ENCODE measurements at regions of chr21 and their contacts with region 1.

Region 1: GRCh38 chr21:41361786-41362604 is at the start of gene MX2:
- DNase-seq: peak; percentile 35
- H3K4me3 ChIP-seq: peak within 1 kb of the TSS; percentile 58
- H3K27ac ChIP-seq: peak within 1 kb of the TSS; percentile 29
- H3K4me1 ChIP-seq: peaks cover 28% of the 10 kb centered on the region
- CTCF ChIP-seq: no peak
- total RNA-seq, gene MX2: 7.3 and 10.4 TPM in 2 replicates

Region 2: GRCh38 chr21:41196636-41197389 is 165.2 kb before region 1 on chr21:
- CTCF ChIA-PET with region 1: no interaction called
- POLR2A ChIA-PET with region 1: no interaction called
- intact Hi-C with region 1: no loop called
- DNase-seq: no peak
- H3K4me3 ChIP-seq: no peak overlapping the region
- H3K27ac ChIP-seq: no peak overlapping the region
- H3K4me1 ChIP-seq: no peaks in the 10 kb centered on the region
- CTCF ChIP-seq: no peak

Region 3: GRCh38 chr21:41283211-41283818 is 78.7 kb before region 1 on chr21:
- CTCF ChIA-PET with region 1: interaction called, 5 read pairs
- POLR2A ChIA-PET with region 1: interaction called, 4 read pairs
- intact Hi-C with region 1: loop called (anchors 1 kb)
- DNase-seq: peak; percentile 85
- H3K4me3 ChIP-seq: no peak overlapping the region
- H3K27ac ChIP-seq: no peak overlapping the region
- H3K4me1 ChIP-seq: peaks cover 8% of the 10 kb centered on the region
- CTCF ChIP-seq: peak; percentile 90

Region 4: GRCh38 chr21:41847066-41847804 is 485.2 kb after region 1 on chr21:
- CTCF ChIA-PET with region 1: no interaction called
- POLR2A ChIA-PET with region 1: no interaction called
- intact Hi-C with region 1: no loop called
- DNase-seq: no peak
- H3K4me3 ChIP-seq: no peak overlapping the region
- H3K27ac ChIP-seq: no peak overlapping the region
- H3K4me1 ChIP-seq: peaks cover 25% of the 10 kb centered on the region
- CTCF ChIP-seq: no peak

Region 5: DNA sequence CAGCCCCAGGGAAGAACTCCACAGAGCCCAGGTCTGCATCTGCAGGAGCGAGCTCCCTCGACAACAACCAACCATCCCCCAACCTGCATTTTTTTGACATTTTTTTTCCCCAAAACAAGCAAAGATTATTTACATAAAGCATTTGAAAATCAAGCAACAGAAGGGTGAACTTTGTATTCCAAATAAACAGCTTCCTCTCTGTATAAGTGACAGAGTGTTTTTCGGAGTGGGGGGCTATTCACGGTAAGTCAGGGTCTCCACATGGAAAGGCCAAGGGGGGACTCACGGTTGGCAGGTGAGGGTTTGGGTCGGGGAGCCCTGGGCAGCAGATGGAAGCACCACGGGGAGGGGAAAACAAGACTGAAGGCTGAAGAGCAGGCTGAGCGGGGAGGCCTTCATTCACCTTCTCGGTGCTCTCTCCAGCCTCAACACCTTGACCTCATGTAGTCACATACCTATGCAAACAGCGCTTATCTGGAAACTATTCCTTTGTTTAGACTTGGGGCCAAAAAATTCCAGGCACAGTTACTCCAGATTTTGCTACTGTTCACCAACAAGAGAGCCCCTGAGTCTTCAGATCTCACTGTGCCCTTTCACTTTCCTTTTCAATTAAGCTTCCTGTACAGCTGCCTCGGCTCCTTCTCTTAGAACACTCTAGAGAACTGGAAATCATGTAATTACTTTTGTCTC is 564.3 kb after region 1 on chr21:
- CTCF ChIA-PET with region 1: no interaction called
- POLR2A ChIA-PET with region 1: no interaction called
- intact Hi-C with region 1: loop called (anchors 10 kb)
- DNase-seq: peak; percentile 82
- H3K4me3 ChIP-seq: peak overlapping the region; percentile 70
- H3K27ac ChIP-seq: peak overlapping the region; percentile 83
- H3K4me1 ChIP-seq: peaks cover 95% of the 10 kb centered on the region
- CTCF ChIP-seq: no peak